ENCODE measurements at regions of chr17 and their contacts with region 1.

Region 1: DNA sequence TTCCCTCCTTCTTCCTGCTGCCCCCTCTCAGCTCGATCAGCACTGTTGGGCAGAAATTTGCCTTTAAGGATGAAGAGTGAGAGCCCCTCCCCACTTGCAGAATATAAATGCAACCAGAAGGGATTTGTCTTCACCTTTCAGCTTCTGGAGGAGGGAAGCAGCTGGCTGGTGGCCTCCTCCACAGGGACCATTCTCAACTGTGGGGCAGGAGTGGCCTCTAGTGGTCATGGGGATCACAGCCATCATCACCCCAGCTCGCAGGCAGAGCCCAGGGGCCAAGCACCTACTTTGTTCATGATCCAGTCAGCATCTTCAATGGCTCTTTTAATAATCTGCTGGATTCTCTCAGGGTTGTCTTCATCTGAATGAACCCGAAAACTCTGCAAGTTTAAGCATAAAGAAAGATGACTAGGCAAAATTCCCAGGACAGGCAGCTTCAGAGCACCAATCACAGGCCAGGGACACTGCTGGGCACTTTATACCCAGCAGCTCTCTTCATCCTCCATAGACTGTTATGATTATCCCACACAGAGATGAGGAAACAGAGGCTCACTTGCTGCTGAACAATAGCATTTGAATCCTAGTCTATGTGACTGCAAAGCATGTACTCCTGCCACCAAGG is 13.1 kb downstream of the LYRM9 start:
- DNase-seq: peak; percentile 46
- ATAC-seq: peak; percentile 85
- H3K4me3 Mint-ChIP-seq: no peak overlapping the region
- H3K27ac Mint-ChIP-seq: no peak overlapping the region
- H3K4me1 Mint-ChIP-seq: no peaks in the 10 kb centered on the region
- H3K27me3 Mint-ChIP-seq: no peaks in the 10 kb centered on the region
- CTCF ChIP-seq: peak; percentile 38

Region 2: DNA sequence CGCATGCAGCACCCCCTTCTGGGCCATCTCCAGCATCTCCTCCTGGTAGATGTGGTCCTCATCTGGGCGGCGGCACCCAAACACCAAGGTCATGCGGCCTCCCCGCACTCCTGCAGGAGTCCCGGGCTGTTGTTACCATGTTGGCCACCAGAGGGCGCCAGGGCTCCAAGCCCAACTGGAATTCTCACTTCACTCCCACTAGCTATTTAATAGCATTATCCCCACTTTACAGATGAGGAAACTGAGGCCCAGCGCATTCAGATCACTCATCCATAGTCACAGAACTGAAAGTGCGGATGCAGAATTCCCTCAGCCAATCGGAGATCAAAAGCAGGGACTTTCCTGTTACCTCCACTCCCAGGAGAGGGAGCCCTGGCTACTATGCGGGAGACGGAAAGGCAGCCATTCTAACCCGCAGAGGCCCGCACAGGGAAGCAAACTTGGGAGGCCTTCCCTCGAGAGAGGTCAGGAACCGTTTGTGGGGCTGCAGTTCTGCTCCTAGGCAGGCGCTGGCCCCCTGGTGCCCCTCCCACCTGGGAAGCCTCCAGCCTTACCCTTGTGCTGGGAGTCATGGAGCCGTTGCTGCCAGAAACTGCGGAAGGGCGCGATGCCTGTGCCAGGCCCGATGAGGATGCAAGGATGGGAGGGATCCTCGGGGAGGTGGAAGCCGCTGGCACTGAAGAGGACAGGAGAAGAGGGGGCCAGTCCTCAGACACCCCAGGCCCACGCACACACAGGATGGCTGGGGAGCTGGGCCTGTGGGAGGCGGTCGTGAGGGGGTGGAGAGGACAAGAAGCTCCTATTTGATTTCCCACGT is 119.8 kb before region 1 on chr17:
- CTCF ChIA-PET with region 1: interaction called, 91 read pairs
- POLR2A ChIA-PET with region 1: no interaction called
- intact Hi-C with region 1: loop called (anchors 1 kb)
- DNase-seq: peak; percentile 73
- ATAC-seq: peak; percentile 50
- H3K4me3 Mint-ChIP-seq: no peak overlapping the region
- H3K27ac Mint-ChIP-seq: no peak overlapping the region
- H3K4me1 Mint-ChIP-seq: no peaks in the 10 kb centered on the region
- H3K27me3 Mint-ChIP-seq: peaks cover 4% of the 10 kb centered on the region
- CTCF ChIP-seq: peak; percentile 66